GM10248 (cell line): ENCODE measurements at regions of chr6 and their contacts with region 1.

Region 1: GRCh38 chr6:133923938-133924593 is 29.0 kb upstream of the TBPL1 start:
- DNase-seq: peak; percentile 54
- CTCF ChIP-seq: peak; percentile 70

Region 2: DNA sequence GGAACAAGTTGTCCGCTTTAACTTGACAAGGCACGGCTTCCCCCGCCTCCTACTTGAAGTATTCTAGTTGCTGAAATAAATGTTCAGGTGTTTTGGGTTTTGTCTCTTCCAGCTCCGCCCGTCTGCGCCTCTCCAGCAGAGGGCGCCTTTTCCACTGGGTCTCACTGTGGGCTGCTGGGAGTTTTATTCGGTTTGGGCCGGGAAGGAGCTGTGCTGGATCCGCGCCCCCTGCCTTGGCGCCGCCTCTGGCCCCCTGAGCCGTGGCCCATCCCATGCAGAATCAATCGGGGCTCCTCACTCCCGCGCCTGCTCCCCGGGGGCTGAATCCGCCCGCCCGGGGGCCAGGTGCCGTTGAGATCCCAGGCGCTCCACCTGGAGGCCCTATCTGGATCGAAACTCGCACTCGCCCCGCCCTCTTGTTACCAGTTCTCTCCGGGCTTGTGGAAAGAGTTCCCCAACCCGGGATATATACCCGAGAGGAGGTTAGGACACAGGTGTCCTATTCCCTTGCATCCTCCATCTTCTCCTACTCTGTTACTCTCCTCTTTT is 86.2 kb before region 1 on chr6:
- CTCF ChIA-PET with region 1: interaction called, 25 read pairs
- POLR2A ChIA-PET with region 1: no interaction called
- DNase-seq: peak; percentile 58
- CTCF ChIP-seq: peak; percentile 77

Region 3: GRCh38 chr6:133937909-133938308 is 13.8 kb after region 1 on chr6:
- CTCF ChIA-PET with region 1: interaction called, 51 read pairs
- POLR2A ChIA-PET with region 1: no interaction called
- DNase-seq: no peak
- CTCF ChIP-seq: no peak

Region 4: GRCh38 chr6:133973109-133973971 is 49.3 kb after region 1 on chr6:
- CTCF ChIA-PET with region 1: interaction called, 25 read pairs
- POLR2A ChIA-PET with region 1: no interaction called
- DNase-seq: peak; percentile 44
- CTCF ChIP-seq: peak; percentile 63

Region 5: GRCh38 chr6:134097114-134097707 is 173.1 kb after region 1 on chr6:
- CTCF ChIA-PET with region 1: interaction called, 334 read pairs
- POLR2A ChIA-PET with region 1: no interaction called
- DNase-seq: peak; percentile 62
- CTCF ChIP-seq: peak; percentile 55